A549 (cell line): ENCODE measurements at regions of chr4 and their contacts with region 1.

Region 1: DNA sequence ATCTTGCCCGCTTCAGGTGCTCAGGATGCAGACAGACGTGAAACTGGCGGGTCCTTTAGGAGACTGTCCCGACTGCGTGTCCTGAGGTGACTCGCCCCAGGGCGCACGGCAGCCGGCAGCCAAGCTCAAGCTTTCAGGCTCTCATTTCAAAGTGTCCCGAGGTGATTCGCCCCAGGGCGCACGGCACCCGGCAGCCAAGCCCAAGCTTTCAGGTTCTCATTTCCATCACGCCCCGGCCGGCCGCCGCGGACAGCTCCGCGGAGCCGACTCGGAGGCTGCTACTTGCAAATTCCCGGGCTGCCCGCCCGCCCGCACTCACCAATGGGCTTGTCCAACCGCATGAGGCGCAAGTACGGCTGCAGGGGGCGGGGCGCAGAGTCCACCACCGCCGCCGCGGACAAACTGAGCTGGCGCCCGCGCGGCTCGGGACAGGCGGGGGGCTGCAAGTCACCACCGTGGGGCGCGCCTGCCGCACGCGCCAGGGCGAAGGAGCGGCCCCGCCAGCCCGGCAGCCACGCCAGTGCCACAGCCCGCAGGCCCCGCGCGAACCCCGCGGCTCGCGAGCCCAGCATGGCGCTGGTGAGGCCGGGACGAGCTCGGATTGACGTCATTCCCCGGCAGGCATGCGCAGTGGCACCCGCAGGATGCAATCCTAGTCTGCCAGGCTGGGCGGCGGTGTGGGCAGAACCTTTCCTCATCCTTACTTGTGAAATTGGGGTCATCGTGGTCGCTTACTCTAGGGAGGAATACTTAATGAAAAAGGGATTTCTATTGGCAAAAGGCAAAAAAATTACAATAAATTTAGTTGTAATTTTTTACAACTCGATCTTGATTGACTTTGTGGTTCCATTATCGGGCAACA is at the start of gene COQ2:
- DNase-seq: peak; percentile 89 to 92
- ATAC-seq: peak; percentile 94 to 95
- H3K4me3 ChIP-seq: peak within 1 kb of the TSS; percentile 62
- H3K27ac ChIP-seq: peak within 1 kb of the TSS; percentile 98 to 99
- H3K4me1 ChIP-seq: peaks cover 20% of the 10 kb centered on the region; the same call in 2 of the 3 replicates
- CTCF ChIP-seq: peak; percentile 8; the same call in 1 of the 3 replicates
- EP300 ChIP-seq: no peak
- POLR2A ChIP-seq: peak; percentile 90
- RAD21 ChIP-seq: peak in 1 of 2 experiments; percentile 35; a peak in 2 of 5 replicates
- polyA plus RNA-seq, gene COQ2: 27.1 and 35.9 TPM in 2 replicates

Region 2: GRCh38 chr4:83034630-83035494 is 249.6 kb before region 1 on chr4 and contains the start of gene COPS4:
- CTCF ChIA-PET with region 1: interaction called, 3 read pairs
- POLR2A ChIA-PET with region 1: interaction called, 16 read pairs
- DNase-seq: peak; percentile 87 to 99
- ATAC-seq: peak; percentile 99
- H3K4me3 ChIP-seq: peak within 1 kb of the TSS; percentile 64
- H3K27ac ChIP-seq: peak within 1 kb of the TSS; percentile 85 to 96
- H3K4me1 ChIP-seq: peaks cover 5% of the 10 kb centered on the region; the same call in 2 of the 3 replicates
- CTCF ChIP-seq: no peak
- EP300 ChIP-seq: 0 out of 5 replicates have a peak, but pooled peaks of 1 of the 2 experiments have one; percentile 22
- POLR2A ChIP-seq: peak; percentile 58
- RAD21 ChIP-seq: peak in 1 of 2 experiments; percentile 20
- polyA plus RNA-seq, gene COPS4: 35.5 and 36.5 TPM in 2 replicates

Region 3: GRCh38 chr4:83074086-83074704 is 210.2 kb before region 1 on chr4:
- CTCF ChIA-PET with region 1: interaction called, 19 read pairs
- POLR2A ChIA-PET with region 1: interaction called, 3 read pairs
- DNase-seq: peak; percentile 32 to 81
- ATAC-seq: peak in 1 of 2 experiments; percentile 78; a peak in 4 of 6 replicates
- H3K4me3 ChIP-seq: no peak overlapping the region
- H3K27ac ChIP-seq: no peak overlapping the region
- H3K4me1 ChIP-seq: peaks cover 20% of the 10 kb centered on the region
- CTCF ChIP-seq: peak; percentile 61
- EP300 ChIP-seq: no peak
- POLR2A ChIP-seq: no peak
- RAD21 ChIP-seq: peak; percentile 56 to 63

Region 4: GRCh38 chr4:83150653-83151330 is 133.6 kb before region 1 on chr4:
- CTCF ChIA-PET with region 1: no interaction called
- POLR2A ChIA-PET with region 1: no interaction called
- DNase-seq: no peak
- ATAC-seq: no peak
- H3K4me3 ChIP-seq: no peak overlapping the region
- H3K27ac ChIP-seq: no peak overlapping the region
- H3K4me1 ChIP-seq: no peaks in the 10 kb centered on the region
- CTCF ChIP-seq: no peak
- EP300 ChIP-seq: no peak
- POLR2A ChIP-seq: no peak
- RAD21 ChIP-seq: no peak

Region 5: GRCh38 chr4:83267121-83267829 is 17.1 kb before region 1 on chr4:
- CTCF ChIA-PET with region 1: interaction called, 24 read pairs
- POLR2A ChIA-PET with region 1: interaction called, 14 read pairs
- DNase-seq: peak; percentile 44 to 72
- ATAC-seq: peak; percentile 98 to 99
- H3K4me3 ChIP-seq: no peak overlapping the region
- H3K27ac ChIP-seq: peak overlapping the region; percentile 59 to 81
- H3K4me1 ChIP-seq: peaks cover 30% of the 10 kb centered on the region
- CTCF ChIP-seq: no peak
- EP300 ChIP-seq: peak in 1 of 2 experiments; percentile 39; a peak in 1 of 5 replicates
- POLR2A ChIP-seq: no peak
- RAD21 ChIP-seq: no peak; a peak in 1 of 5 replicates

Region 6: DNA sequence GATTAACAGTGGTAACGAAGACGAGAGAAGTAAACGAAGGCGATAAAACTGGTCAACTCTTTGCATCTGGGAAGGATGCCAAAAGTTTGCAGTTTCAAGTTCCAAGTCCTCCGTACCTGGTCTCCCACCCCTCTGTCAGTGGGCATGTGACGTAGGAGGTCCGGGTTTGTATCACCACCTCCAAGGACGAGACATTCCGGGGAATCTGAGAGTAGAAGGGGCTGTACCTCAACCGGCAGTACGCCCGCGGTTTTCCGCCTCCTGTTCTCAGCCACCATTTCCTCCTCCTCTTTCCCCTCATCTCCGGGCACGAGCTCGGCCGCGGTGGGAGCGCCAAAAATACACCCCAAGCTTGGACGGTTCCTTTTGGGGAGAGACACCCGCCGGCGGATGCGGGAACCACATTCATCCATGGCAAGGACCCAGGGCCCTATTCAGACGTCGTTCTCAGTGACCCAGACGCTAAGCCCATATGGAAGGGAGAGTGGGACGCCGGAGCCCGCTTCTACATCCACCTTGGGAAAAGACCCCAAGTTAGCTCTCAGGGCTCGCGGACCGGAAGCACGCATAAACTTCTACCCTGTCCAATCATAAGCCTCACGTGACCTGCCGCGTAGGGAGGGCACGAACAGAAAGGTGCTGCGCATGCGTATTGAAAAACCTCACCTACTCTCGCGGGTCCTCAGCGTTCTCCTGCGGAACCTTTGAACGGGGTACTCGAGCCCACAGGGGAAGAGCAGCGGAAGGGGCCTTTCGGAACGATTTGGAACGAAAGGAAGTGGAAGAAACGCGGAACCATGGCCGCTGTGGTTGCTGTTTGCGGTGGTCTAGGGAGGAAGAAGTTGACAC is 171.1 kb after region 1 on chr4 and contains the starts of genes HELQ and MRPS18C:
- CTCF ChIA-PET with region 1: no interaction called
- POLR2A ChIA-PET with region 1: interaction called, 13 read pairs
- DNase-seq: peak; percentile 93 to 98
- ATAC-seq: peak; percentile 97 to 98
- H3K4me3 ChIP-seq: peak within 1 kb of the TSS; percentile 88
- H3K27ac ChIP-seq: peak within 1 kb of the TSS; percentile 90 to 92
- H3K4me1 ChIP-seq: peaks cover 20% of the 10 kb centered on the region; the same call in 2 of the 3 replicates
- CTCF ChIP-seq: no peak
- EP300 ChIP-seq: no peak
- POLR2A ChIP-seq: peak; percentile 62
- RAD21 ChIP-seq: no peak
- polyA plus RNA-seq, gene HELQ: 6.3 and 7.3 TPM in 2 replicates
- polyA plus RNA-seq, gene MRPS18C: 58.5 and 67.4 TPM in 2 replicates